Activated CD8-positive, alpha-beta memory T cell treated with anti-CD3 and anti-CD28 coated beads, Interleukin-2, amount 10 ng/mL, durations not matched to agents 7 days and 5 days (primary cell): ENCODE measurements at regions of chr5 and their contacts with region 1.

Region 1: DNA sequence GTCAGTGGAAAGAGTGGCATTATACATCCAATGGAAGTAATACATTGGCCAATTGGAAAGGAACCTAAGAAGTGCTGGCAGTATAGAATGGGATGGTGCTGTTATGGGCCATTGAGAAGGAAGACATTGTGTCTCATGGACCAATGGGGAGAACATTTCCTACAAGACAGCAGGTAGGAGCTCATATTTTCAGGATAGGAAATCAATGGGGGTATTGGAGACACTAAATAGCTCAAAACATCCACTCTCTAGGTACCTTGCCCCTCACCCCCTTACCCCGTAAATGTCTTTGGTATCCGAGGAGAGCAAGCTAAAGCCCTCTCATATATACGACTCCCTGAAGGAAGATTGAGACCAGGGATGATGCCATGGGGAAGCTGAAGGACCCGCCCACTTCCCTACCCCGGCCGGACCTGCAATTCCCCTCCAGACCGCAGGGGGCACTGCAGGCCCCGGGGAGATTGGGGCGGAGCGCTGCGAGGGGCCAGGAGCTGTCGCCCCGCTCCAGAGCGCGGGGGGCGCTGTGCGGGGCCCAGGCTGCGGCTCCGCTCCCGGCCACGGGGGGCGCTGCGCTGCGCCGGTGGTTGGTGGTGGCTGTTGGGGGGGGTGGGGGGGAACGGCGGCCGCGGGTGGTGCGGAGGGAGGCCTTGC is at the start of gene KDM3B:
- DNase-seq: peak; percentile 91
- ATAC-seq: peak; percentile 74
- H3K4me3 Mint-ChIP-seq: peak within 1 kb of the TSS; percentile 94
- H3K27ac Mint-ChIP-seq: peak within 1 kb of the TSS; percentile 97
- H3K4me1 Mint-ChIP-seq: peaks cover 42% of the 10 kb centered on the region
- H3K27me3 Mint-ChIP-seq: no peaks in the 10 kb centered on the region
- total RNA-seq, gene KDM3B: 57.4 to 60.5 TPM

Region 2: DNA sequence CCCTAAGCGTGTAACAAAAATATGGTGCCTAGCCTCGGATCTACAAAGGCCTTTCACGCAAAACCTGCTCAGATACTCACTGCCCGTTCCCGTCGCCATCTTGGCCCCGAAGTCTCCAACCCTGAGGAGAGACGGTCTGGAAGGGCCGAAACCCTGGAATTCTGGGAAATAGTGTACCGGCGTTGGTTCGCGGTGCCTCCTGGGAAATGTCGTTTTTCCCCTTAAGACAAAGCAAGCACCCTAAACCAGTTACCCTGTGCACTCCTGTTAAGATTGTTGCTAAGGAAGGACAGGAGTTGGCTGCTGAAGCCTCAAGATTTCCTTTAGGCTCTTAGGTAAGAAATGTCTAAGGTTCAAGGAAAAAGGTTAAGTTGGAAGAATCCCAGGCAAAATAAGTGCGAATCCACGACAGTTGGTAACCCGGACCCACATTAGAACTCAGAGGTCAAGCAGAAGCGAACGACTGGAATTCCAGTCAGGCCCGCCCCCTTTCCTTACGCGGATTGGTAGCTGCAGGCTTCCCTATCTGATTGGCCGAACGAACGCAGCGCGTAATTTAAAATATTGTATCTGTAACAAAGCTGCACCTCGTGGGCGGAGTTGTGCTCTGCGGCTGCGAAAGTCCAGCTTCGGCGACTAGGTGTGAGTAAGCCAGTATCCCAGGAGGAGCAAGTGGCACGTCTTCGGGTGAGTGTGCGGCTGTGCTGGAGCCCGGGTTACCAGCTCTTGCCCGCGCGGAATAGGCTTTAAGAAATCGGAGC is 173.5 kb before region 1 on chr5 and contains the starts of genes BRD8 and KIF20A:
- CTCF ChIA-PET with region 1: interaction called, 51 read pairs
- DNase-seq: peak; percentile 98
- ATAC-seq: peak; percentile 91
- H3K4me3 Mint-ChIP-seq: no peak within 1 kb of the TSS
- H3K27ac Mint-ChIP-seq: no peak within 1 kb of the TSS
- H3K4me1 Mint-ChIP-seq: peaks cover 37% of the 10 kb centered on the region
- H3K27me3 Mint-ChIP-seq: no peaks in the 10 kb centered on the region
- total RNA-seq, gene BRD8: 74.1 to 86.7 TPM
- total RNA-seq, gene KIF20A: 61.7 to 64.3 TPM

Region 3: DNA sequence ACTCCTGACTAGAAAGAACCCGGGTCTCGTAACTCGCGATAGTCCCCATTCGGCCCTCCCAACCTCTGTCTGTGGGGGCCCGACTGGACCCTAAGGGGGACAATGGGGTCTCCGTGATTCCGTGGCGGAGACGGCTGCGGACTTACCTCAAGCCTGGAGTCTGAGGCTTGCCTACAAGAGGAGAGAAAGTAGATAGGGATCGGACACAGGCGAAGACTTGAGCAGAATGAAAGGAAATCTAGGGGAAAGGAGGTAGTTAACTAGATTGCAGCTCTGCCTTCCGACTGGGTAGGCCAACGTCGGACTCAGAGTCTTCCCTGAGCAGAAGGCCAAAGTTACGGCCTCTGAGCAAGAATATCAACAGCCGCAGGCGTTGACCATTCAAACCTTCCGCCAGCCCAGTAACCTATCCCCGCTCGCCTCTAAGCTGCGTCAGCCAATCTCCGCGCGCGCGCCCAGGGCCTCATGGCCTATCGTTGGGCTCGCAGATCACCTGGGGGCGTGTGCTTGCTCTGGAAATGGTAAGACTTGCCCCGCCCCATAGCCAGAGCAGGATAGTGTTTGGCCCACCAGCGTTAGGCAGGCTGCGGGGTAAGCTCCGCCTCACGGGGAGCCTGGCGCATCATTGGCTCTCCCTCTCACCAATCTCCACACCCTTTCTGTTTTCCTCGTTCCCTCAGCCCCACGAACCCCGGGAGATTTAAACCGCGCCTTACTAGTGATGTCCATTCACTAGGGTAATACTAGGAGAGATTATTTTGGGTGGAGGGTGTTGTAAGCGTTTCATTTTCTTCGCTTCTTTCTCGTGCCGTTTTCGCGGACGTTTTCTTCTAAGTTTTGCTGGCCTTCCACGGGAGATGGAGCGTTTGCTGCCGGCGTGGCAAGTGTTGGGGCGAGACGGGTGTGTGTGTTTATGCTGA is 20.5 kb before region 1 on chr5 and contains the start of gene CDC25C:
- CTCF ChIA-PET with region 1: interaction called, 382 read pairs
- DNase-seq: peak; percentile 99
- ATAC-seq: peak; percentile 100
- H3K4me3 Mint-ChIP-seq: peak within 1 kb of the TSS; percentile 82
- H3K27ac Mint-ChIP-seq: peak within 1 kb of the TSS; percentile 80
- H3K4me1 Mint-ChIP-seq: peaks cover 28% of the 10 kb centered on the region
- H3K27me3 Mint-ChIP-seq: peaks cover 5% of the 10 kb centered on the region
- total RNA-seq, gene CDC25C: 14.9 to 21.3 TPM

Region 4: DNA sequence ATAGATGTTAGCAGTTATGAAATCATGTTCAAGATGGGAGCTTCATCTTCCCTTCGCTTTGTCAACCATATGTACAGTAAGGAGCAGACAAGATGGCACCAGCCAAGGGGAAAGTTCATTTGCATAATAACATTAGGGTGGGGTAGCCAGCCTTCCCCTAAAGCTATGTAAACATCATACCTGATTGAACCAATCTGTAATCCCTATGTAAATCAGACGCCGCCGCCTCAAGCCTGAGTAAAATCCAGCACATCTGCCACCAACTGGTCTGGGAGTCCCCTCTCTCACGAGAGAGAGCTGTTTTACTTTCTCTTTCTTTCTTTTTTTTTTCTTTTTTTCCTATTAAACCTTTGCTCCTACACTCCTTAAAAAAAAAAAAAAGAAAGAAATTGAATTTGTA is 55.8 kb after region 1 on chr5:
- CTCF ChIA-PET with region 1: interaction called, 49 read pairs
- DNase-seq: peak; percentile 77
- ATAC-seq: peak; percentile 97
- H3K4me3 Mint-ChIP-seq: peak overlapping the region; percentile 49
- H3K27ac Mint-ChIP-seq: peak overlapping the region; percentile 68
- H3K4me1 Mint-ChIP-seq: peaks cover 22% of the 10 kb centered on the region
- H3K27me3 Mint-ChIP-seq: no peaks in the 10 kb centered on the region

Region 5: GRCh38 chr5:138492560-138493045 is 140.4 kb after region 1 on chr5:
- CTCF ChIA-PET with region 1: no interaction called
- DNase-seq: no peak
- ATAC-seq: no peak
- H3K4me3 Mint-ChIP-seq: peak overlapping the region; percentile 79
- H3K27ac Mint-ChIP-seq: peak overlapping the region; percentile 56
- H3K4me1 Mint-ChIP-seq: peaks cover 4% of the 10 kb centered on the region
- H3K27me3 Mint-ChIP-seq: peaks cover 56% of the 10 kb centered on the region

Region 6: DNA sequence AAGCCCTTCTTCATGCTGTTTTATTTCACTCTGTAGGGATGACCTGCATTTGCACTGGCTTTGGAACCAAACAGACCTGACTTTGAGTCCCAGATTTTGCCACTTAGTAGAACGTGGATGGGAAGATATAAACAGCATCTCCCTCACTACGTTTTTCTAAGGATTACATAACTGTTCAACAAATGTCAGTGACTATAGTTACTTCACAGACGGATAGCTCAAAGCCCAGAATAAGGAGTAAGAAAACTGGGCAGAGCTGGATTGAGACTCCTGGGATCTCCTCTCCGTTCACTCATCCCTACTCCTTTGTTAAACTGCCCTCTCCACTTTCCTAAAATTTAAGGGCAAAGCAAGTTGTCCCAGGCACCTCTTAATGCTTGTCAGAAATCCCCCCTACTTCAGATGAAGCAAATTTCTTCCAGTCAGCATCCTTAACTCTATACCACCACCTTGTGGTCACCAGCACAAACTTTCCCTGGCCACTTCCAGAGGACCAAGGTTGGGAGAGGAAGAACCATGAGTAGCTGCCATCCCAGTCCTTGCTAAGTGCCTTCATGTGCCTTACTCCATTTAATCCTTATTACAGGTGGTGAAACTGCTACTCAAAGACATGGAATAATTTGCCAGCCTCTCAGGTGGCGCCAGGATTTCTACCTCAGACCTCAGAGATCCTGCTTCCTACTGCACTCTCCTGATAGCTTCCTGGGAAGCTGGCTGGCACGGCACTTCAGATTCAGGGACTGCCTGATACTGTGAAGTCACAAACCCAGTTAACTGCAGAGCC is 151.5 kb after region 1 on chr5:
- CTCF ChIA-PET with region 1: interaction called, 10 read pairs
- DNase-seq: peak; percentile 48
- ATAC-seq: peak; percentile 69
- H3K4me3 Mint-ChIP-seq: no peak overlapping the region
- H3K27ac Mint-ChIP-seq: no peak overlapping the region
- H3K4me1 Mint-ChIP-seq: no peaks in the 10 kb centered on the region
- H3K27me3 Mint-ChIP-seq: no peaks in the 10 kb centered on the region

Region 7: DNA sequence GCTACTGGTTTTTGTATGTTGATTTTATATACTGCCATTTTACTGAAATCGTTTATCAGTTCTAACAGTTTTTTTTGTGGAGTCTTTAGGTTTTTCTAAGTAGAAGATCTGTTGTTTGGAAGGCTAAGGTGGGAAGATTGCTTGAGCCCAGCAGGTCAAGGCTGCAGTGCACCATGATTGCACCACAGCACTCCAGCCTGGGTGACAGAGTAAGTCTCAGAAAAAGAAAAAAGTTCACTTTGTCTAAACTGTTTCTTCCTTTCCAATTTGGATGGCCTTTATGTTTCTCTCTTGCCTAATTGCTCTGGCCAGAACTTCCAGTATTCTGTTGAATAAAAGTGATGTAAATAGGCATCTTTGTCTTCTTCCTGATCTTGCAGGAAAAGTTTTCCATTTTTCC is 647.5 kb after region 1 on chr5:
- CTCF ChIA-PET with region 1: no interaction called
- DNase-seq: no peak
- ATAC-seq: no peak
- H3K4me3 Mint-ChIP-seq: no peak overlapping the region
- H3K27ac Mint-ChIP-seq: no peak overlapping the region
- H3K4me1 Mint-ChIP-seq: no peaks in the 10 kb centered on the region
- H3K27me3 Mint-ChIP-seq: no peaks in the 10 kb centered on the region